AG04450 (cell line): ENCODE measurements at regions of chr3 and their contacts with region 1.

Region 1: DNA sequence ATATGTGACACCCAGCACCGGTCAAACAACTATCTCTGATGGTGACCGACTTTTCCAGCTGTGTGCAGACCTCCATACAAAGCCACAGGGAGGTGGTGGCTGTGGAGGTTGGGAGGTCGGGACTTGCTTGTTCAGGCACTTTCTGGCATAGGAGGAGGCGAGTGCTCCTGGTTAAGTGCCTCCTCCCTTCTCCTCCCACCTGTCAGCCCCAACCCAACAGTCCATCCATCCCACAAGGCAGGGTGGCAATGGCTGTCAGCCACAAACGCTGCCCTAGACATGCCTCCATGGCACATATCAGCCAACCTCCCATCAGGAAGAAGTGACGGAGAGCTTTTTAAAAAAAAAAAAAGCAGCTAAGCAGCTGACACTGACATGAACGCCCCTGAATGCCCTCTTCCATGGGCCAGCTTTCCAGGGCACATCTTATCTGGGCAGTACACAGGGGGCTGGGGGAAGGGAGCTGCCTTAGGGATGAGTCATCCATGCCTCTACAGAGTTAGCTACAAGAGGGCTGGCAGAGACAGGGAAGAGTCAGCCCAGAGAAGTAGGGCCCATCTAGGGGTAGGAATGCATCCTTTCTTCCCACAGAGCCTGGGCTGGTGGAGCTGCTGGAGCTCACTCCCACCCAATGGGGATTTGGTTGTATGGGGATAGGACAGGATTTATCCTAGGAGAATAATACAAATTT is 41.2 kb downstream of the CCDC12 start:
- DNase-seq: peak; percentile 89
- H3K4me3 ChIP-seq: no peak overlapping the region
- H3K27ac ChIP-seq: peak overlapping the region; percentile 80
- H3K27me3 ChIP-seq: no peaks in the 10 kb centered on the region
- CTCF ChIP-seq: peak; percentile 93

Region 2: GRCh38 chr3:46923559-46924350 is 11.6 kb before region 1 on chr3:
- CTCF ChIA-PET with region 1: interaction called, 52 read pairs
- POLR2A ChIA-PET with region 1: no interaction called
- DNase-seq: no peak
- H3K4me3 ChIP-seq: no peak overlapping the region
- H3K27ac ChIP-seq: no peak overlapping the region
- H3K27me3 ChIP-seq: no peaks in the 10 kb centered on the region
- CTCF ChIP-seq: peak; percentile 71

Region 3: GRCh38 chr3:46947981-46948791 is 12.9 kb after region 1 on chr3:
- CTCF ChIA-PET with region 1: interaction called, 13 read pairs
- POLR2A ChIA-PET with region 1: interaction called, 4 read pairs
- DNase-seq: no peak
- H3K4me3 ChIP-seq: no peak overlapping the region
- H3K27ac ChIP-seq: no peak overlapping the region
- H3K27me3 ChIP-seq: no peaks in the 10 kb centered on the region
- CTCF ChIP-seq: no peak

Region 4: GRCh38 chr3:46953234-46954010 is 18.1 kb after region 1 on chr3:
- CTCF ChIA-PET with region 1: interaction called, 14 read pairs
- POLR2A ChIA-PET with region 1: interaction called, 4 read pairs
- DNase-seq: no peak
- H3K4me3 ChIP-seq: no peak overlapping the region
- H3K27ac ChIP-seq: no peak overlapping the region
- H3K27me3 ChIP-seq: no peaks in the 10 kb centered on the region
- CTCF ChIP-seq: no peak

Region 5: GRCh38 chr3:46959161-46959511 is 23.8 kb after region 1 on chr3:
- CTCF ChIA-PET with region 1: interaction called, 14 read pairs
- POLR2A ChIA-PET with region 1: no interaction called
- DNase-seq: no peak
- H3K4me3 ChIP-seq: no peak overlapping the region
- H3K27ac ChIP-seq: no peak overlapping the region
- H3K27me3 ChIP-seq: no peaks in the 10 kb centered on the region
- CTCF ChIP-seq: no peak

Region 6: GRCh38 chr3:46968783-46969428 is 33.6 kb after region 1 on chr3:
- CTCF ChIA-PET with region 1: interaction called, 11 read pairs
- POLR2A ChIA-PET with region 1: no interaction called
- DNase-seq: no peak
- H3K4me3 ChIP-seq: no peak overlapping the region
- H3K27ac ChIP-seq: no peak overlapping the region
- H3K27me3 ChIP-seq: no peaks in the 10 kb centered on the region
- CTCF ChIP-seq: no peak

Region 7: DNA sequence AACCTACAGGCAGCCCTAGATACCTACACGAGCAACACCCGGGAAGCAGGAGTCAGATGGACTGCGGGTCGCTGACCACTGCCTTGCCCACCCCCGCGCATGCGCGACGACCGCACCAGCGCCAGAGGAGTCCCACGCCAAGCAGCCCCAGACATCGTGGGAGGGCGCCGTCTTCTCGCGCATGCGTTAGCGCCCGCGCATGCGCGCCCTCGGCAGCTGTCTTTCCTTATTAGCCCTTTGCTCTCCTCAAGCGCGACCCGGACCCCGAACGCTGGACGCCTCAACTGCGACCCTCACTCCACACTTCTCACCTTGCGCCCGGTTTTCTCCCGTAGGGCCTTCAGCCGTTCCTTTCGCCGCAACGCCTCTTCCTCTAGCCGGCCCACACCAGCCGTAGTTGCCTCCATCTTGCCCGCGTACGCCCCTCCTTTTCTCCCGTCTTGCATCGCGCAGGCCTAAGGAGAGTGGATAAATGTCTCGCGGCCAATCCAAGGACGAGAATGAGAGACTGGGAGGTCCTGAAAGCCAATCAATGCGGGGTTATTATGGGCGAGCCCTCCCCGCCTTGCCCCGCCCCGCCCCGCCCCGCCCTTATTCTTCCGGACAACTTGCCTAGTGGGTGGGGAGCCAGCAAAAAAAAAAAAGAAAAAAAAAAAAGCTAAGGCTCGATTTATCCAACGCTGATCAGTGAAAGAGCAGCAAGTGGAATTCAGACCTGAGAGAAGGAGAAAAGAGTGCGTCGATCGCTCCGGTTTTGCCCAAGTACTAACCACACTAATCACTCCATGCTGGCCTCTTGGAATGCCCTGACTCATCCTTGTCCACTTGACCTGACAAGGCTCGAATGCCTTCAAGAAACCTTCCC is 41.2 kb after region 1 on chr3 and contains the start of gene CCDC12:
- CTCF ChIA-PET with region 1: interaction called, 6 read pairs
- POLR2A ChIA-PET with region 1: interaction called, 15 read pairs
- DNase-seq: peak; percentile 98
- H3K4me3 ChIP-seq: peak within 1 kb of the TSS; percentile 90
- H3K27ac ChIP-seq: peak within 1 kb of the TSS; percentile 94
- H3K27me3 ChIP-seq: no peaks in the 10 kb centered on the region
- CTCF ChIP-seq: no peak
- polyA plus RNA-seq, gene CCDC12: 18.3 and 18.4 TPM in 2 replicates